Aorta (tissue), 5 donors: ENCODE measurements at regions of chr7 and their contacts with region 1.

Region 1: GRCh38 chr7:12888717-12889116 is 201.3 kb downstream of the ARL4A start:
- DNase-seq: no peak
- ATAC-seq: no peak
- H3K4me3 ChIP-seq: no peak overlapping the region
- H3K27ac ChIP-seq: no peak overlapping the region
- H3K4me1 ChIP-seq: no peaks in the 10 kb centered on the region
- H3K27me3 ChIP-seq: no peaks in the 10 kb centered on the region

Region 2: GRCh38 chr7:12601302-12601869 is 287.3 kb before region 1 on chr7:
- intact Hi-C with region 1: no loop called
- DNase-seq: no peak
- ATAC-seq: no peak
- H3K4me3 ChIP-seq: no peak overlapping the region
- H3K27ac ChIP-seq: no peak overlapping the region
- H3K4me1 ChIP-seq: no peaks in the 10 kb centered on the region
- H3K27me3 ChIP-seq: no peaks in the 10 kb centered on the region

Region 3: GRCh38 chr7:12686894-12687717 is 201.6 kb before region 1 on chr7 and contains the start of gene ARL4A:
- intact Hi-C with region 1: loop called (anchors 10 kb)
- DNase-seq: peak; percentile 99
- ATAC-seq: peak; percentile 97
- H3K4me3 ChIP-seq: peak within 1 kb of the TSS; percentile 73 to 93
- H3K27ac ChIP-seq: peak within 1 kb of the TSS in 1 of 2 donors; percentile 3
- H3K4me1 ChIP-seq: no peaks in the 10 kb centered on the region
- H3K27me3 ChIP-seq: no peaks in the 10 kb centered on the region
- total RNA-seq, gene ARL4A: 21.9 to 34.3 TPM